ENCODE measurements at regions of chr4 and their contacts with region 1.

Region 1: DNA sequence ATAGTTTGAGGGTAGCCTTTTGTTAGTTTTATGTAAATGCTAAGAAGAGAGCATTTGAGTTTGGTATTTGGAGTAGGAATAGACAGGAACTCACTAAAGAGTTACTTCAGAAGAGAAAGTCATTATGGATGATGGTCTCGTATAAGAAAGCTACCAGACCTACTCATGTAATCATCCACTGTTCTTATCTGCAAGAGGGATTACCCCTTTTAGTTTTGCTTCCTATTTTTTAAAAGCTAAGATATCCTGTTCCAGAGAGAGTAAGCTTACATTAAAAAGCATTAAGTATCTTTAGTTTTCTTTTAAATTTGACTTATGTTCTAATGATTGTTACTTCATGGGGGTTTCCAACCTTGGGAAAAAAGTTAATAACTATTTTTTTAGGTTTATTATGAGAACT is 12.5 kb upstream of the ART3 start:
- DNase-seq: no peak
- ATAC-seq: no peak

Region 2: DNA sequence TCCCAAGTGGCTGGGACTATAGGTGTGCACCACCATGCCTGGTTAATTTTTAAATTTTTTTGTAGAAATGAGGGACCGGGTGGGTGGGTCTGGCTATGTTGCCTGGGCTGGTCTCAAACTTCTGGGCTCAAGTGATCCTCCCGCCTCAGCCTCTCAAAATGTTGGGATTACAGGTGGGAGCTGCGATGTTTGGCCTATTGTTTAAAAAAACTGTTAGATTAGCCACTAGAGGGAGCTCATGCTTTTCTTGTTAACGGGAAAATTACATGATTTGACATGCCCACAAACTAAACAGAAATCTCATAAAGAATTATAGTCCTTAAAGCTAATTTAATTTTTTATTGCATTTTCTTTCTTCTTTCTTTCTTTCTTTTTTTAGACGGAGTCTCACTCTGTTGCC is 66.3 kb before region 1 on chr4:
- intact Hi-C with region 1: loop called (anchors 5 kb)
- DNase-seq: no peak
- ATAC-seq: peak; percentile 43